ENCODE measurements at regions of chr5 and their contacts with region 1.

Region 1: GRCh38 chr5:154811653-154812365 is 38.6 kb downstream of the FAXDC2 start:
- DNase-seq: peak; percentile 71
- ATAC-seq: peak; percentile 62

Region 2: GRCh38 chr5:154654486-154655371 is 157.1 kb before region 1 on chr5:
- intact Hi-C with region 1: loop called (anchors 5 kb)
- DNase-seq: no peak
- ATAC-seq: peak; percentile 38

Measured in left ventricle myocardium superior (tissue), 1 donor.